Aorta (tissue), 5 donors: ENCODE measurements at regions of chr1 and their contacts with region 1.

Region 1: GRCh38 chr1:161209790-161210409 is 5.2 kb upstream of the FCER1G start:
- DNase-seq: peak; percentile 84 to 90
- ATAC-seq: peak; percentile 83
- H3K4me3 ChIP-seq: no peak overlapping the region
- H3K27ac ChIP-seq: no peak overlapping the region
- H3K4me1 ChIP-seq: no peaks in the 10 kb centered on the region
- H3K27me3 ChIP-seq: no peaks in the 10 kb centered on the region

Region 2: GRCh38 chr1:162422662-162423375 is 1212.9 kb after region 1 on chr1:
- intact Hi-C with region 1: loop called in 1 of 2 experiments (anchors 5 kb)
- DNase-seq: no peak
- ATAC-seq: no peak
- H3K4me3 ChIP-seq: no peak overlapping the region
- H3K27ac ChIP-seq: no peak overlapping the region
- H3K4me1 ChIP-seq: no peaks in the 10 kb centered on the region
- H3K27me3 ChIP-seq: no peaks in the 10 kb centered on the region